H1 (cell line): ENCODE measurements at regions of chr11 and their contacts with region 1.

Region 1: DNA sequence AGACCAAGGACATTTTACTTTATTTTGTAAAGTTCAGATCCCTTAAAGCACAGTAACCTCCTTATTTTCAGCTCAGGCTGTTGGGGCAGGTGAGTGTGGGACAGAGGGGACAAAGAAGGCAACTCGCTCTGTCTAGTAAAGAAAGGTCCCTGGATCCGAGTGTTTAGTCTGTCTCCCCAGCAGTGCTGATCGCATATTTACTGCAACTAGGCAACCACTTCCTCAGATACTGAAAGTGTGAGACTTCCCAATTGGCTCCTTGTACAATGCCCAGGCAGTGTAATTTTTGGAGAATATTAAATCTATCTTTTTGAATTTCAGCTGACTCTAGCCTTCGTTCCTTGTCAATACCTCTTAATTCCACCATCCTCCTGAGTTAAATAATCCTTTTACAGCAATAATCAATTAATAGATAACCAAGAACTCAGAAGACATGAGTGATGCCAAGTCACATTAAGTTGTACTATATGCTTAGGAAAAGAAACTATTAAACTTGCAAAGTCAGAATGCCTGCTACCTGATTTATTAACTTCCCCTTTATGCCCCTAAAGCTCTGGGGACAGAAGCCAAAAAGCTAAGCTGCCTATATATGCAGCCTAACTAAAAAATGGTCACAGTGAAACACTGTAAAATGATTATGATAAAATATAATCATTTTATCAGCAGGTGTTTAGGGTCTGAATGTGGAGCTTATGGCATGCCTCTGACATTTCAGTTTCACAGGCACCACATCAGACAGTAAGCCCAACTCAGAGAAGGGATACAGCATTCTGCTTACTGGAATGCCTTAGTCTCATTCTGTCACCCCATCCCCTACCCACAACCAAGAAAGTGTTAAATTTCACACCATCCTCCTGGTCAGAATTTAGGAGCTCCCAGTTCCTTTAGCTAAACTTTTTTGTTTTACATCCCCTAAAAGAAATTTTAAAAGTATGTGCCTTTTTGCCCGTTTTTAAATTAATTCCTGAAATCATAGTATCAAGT is 138.7 kb downstream of the TRIM44 start:
- DNase-seq: no peak
- H3K4me3 ChIP-seq: no peak overlapping the region
- H3K27ac ChIP-seq: no peak overlapping the region
- H3K4me1 ChIP-seq: no peaks in the 10 kb centered on the region
- H3K27me3 ChIP-seq: no peaks in the 10 kb centered on the region
- CTCF ChIP-seq: no peak
- EP300 ChIP-seq: no peak
- POLR2A ChIP-seq: no peak
- RAD21 ChIP-seq: no peak

Region 2: DNA sequence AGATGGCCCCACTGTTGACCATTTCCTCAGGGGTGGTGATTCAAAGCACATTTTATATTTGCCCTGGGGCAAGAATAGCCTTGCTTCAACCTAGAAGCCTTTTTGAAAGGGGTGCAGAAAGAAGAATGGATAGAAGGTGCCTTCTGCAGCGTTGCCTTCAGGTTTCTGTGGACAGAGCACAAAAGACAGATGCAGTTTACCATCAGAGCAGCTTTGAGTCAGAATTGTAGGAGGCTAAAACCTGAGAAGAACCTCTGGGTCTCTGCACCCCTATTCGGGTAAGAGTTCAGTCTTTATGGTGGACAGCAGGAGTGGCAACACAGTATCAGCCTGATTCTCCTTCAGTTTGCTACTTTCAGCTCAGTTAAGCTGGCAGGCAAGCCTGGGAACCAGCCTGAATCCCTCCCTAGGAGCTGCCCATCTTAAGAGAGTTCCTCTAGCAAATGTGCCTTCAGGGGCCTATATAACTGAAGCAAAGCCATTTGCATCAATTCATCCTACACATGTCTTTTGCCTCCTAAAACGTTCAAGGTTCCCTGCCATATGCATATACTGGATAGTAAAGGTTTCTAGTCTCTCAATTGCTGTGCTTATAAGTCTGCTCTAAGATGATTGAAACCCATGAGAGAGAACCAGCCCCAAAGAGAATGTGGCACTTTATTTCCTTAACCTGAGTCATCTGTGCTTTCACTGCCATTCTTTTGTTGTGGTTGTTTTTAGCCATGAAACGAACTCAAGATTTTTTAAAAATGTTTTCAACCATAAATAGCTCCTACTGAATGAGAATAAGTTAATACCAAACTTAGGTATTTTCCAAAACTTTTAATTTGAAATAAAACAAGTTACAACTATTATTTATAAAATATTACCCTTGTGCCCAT is 15.7 kb before region 1 on chr11:
- CTCF ChIA-PET with region 1: interaction called, 21 read pairs
- POLR2A ChIA-PET with region 1: no interaction called
- DNase-seq: no peak
- H3K4me3 ChIP-seq: no peak overlapping the region
- H3K27ac ChIP-seq: no peak overlapping the region
- H3K4me1 ChIP-seq: peaks cover 0 to 2% (median 0%) of the 10 kb centered on the region in 4 experiments; a peak in 1 of 7 replicates
- H3K27me3 ChIP-seq: no peaks in the 10 kb centered on the region
- CTCF ChIP-seq: no peak
- EP300 ChIP-seq: no peak
- POLR2A ChIP-seq: no peak
- RAD21 ChIP-seq: no peak

Region 3: DNA sequence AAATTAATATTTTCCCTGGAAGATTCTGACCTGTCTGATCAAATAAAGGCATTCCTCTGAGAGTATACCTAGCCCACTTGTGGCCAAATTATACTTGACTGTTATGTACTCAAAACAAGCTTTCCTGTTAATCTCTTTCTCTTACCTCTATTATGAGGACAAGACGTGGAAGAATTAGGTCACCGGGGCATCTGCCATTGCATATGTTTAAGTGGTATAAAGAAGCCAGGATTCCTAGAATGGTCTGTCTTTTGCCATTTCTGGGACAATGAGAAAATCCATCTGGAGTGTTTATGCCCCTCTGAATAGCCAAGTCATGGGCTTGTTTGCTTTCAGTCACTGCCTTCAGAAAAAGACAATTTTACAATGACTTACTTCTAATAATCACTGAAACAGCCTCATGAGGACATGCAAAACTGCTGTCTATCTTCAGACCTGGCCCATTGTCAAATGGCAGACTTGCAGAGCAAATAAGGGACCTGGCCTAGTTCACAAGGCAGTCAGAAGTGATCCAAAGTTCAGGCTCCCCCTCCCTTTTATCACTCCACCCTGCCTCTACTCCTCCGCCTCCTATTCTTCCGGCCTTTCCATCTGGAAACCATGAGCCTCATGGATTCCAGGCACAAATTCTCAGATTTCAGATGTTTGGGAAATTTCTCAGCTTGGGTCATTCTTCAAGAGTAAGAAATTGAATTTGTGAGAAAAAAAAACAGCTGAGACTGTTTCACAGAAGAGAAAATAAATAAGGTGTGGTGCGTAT is 14.5 kb after region 1 on chr11:
- CTCF ChIA-PET with region 1: interaction called, 96 read pairs
- POLR2A ChIA-PET with region 1: interaction called, 3 read pairs
- DNase-seq: no peak
- H3K4me3 ChIP-seq: no peak overlapping the region
- H3K27ac ChIP-seq: no peak overlapping the region
- H3K4me1 ChIP-seq: no peaks in the 10 kb centered on the region
- H3K27me3 ChIP-seq: no peaks in the 10 kb centered on the region
- CTCF ChIP-seq: no peak
- EP300 ChIP-seq: no peak
- POLR2A ChIP-seq: no peak
- RAD21 ChIP-seq: no peak